Activated B cell treated with CpG ODN at 0.5 μM for 24 hours (primary cell): ENCODE measurements at regions of chr2 and their contacts with region 1.

Region 1: DNA sequence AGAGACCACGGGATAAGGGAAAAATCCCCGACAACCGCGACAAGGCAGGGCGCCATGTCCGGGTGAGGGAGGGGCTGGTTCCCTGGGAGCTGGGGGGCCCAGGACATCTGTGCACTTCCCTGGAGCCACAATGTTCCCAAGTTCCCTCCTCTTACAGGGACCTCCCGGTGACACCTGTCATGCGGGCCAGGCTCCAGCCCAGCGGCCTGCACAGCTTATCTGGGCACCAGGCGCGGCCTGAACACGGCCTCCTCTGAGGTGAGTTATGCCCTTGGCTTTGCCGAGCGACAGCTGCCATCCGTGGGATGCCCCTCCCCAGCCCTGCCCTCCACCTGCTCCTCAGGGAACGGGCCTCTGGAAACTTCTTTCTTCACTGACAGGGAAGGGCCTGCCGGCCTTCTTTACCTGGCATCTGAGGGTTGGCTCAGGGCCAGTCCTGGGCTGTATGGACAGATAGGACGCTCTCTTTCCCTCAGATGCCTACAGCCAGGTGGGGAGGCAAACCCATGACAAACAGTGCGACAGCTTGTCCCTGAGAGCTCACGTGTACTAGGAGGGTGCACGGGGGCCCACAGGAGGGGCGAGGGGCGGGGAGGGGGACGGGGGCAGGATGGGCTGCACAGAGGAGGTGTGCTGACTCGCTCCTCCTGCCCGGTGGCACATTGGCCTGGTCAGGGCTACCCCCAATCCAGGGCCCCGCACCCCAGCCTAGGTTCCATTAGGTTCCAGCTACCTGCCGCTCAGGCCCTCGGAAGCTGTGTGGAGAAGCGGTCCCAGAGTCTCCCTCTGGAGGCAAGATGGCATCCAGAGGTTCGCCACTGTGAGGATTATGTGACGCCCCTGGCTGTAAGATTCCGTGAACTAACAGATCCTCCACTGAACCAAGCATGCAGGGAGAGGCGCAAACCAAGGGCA is 34.9 kb upstream of the HPCAL1 start:
- DNase-seq: no peak
- ATAC-seq: no peak
- H3K4me3 Mint-ChIP-seq: no peak overlapping the region
- H3K27ac Mint-ChIP-seq: no peak overlapping the region
- H3K4me1 Mint-ChIP-seq: peaks cover 6% of the 10 kb centered on the region
- H3K27me3 Mint-ChIP-seq: no peaks in the 10 kb centered on the region
- CTCF ChIP-seq: no peak

Region 2: GRCh38 chr2:10297959-10298531 is 30.2 kb after region 1 on chr2:
- CTCF ChIA-PET with region 1: no interaction called
- POLR2A ChIA-PET with region 1: no interaction called
- intact Hi-C with region 1: no loop called
- DNase-seq: no peak
- ATAC-seq: no peak
- H3K4me3 Mint-ChIP-seq: peak overlapping the region; percentile 53
- H3K27ac Mint-ChIP-seq: no peak overlapping the region
- H3K4me1 Mint-ChIP-seq: peaks cover 30% of the 10 kb centered on the region
- H3K27me3 Mint-ChIP-seq: no peaks in the 10 kb centered on the region
- CTCF ChIP-seq: no peak

Region 3: GRCh38 chr2:10668402-10669012 is 400.7 kb after region 1 on chr2:
- CTCF ChIA-PET with region 1: no interaction called
- POLR2A ChIA-PET with region 1: no interaction called
- intact Hi-C with region 1: loop called (anchors 5 kb)
- DNase-seq: no peak
- ATAC-seq: peak; percentile 58
- H3K4me3 Mint-ChIP-seq: no peak overlapping the region
- H3K27ac Mint-ChIP-seq: no peak overlapping the region
- H3K4me1 Mint-ChIP-seq: no peaks in the 10 kb centered on the region
- H3K27me3 Mint-ChIP-seq: no peaks in the 10 kb centered on the region
- CTCF ChIP-seq: no peak